ENCODE measurements at regions of chr22 and their contacts with region 1.

Region 1: DNA sequence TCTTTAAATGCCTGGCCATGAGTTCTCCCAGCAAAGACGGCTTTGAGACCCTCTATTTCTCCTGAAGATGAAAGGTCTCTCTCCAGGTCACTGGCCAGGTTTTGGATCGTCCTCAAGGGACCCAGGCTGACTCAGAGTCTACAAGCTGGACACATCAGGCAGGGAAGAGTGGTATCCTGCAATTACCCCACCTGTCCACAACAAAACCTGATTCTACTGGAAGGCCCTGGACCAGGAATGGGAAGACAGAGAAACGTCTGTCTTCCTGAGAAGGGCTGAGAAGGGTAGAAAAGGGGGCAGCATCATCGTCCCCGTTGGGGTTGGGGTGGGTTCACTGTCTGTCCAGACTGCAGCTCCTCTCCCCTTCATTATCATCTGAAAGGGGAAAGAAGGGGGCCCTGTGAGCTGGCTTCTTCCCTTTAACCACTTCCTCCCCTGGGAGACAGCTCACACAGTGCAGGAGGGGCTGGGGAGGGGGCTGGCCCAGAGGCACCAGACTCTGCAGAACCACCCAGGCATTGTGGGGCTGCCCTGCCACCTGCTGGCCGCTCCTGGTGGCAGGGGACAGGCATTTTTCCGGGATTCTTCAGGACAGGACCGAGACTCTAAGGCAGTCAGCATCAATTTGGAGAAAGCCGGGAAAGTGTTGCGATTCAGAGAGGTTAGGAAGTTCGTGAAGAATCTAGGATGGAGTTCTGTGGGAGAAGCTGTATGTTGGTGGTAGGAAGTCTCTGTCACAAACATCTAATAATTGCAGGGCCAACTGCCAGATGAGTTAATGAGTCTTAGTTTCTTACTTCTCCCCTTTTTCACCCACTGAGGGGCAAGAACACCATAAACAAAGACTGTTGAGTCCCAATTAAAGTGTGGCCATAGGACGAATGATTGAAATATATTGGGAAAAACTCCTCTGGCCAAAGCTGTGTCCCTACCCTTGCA is 57.6 kb downstream of the SYN3 start:
- DNase-seq: peak; percentile 56
- ATAC-seq: peak; percentile 39
- H3K4me3 ChIP-seq: no peak overlapping the region
- H3K4me3 Mint-ChIP-seq: no peak overlapping the region
- H3K27ac ChIP-seq: no peak overlapping the region
- H3K27ac Mint-ChIP-seq: no peak overlapping the region
- H3K4me1 ChIP-seq: peaks cover 6 to 8% of the 10 kb centered on the region in 2 donors
- H3K4me1 Mint-ChIP-seq: peaks cover 4% of the 10 kb centered on the region
- H3K27me3 ChIP-seq: no peaks in the 10 kb centered on the region
- H3K27me3 Mint-ChIP-seq: peaks cover 20% of the 10 kb centered on the region
- CTCF ChIP-seq: peak; percentile 78

Region 2: DNA sequence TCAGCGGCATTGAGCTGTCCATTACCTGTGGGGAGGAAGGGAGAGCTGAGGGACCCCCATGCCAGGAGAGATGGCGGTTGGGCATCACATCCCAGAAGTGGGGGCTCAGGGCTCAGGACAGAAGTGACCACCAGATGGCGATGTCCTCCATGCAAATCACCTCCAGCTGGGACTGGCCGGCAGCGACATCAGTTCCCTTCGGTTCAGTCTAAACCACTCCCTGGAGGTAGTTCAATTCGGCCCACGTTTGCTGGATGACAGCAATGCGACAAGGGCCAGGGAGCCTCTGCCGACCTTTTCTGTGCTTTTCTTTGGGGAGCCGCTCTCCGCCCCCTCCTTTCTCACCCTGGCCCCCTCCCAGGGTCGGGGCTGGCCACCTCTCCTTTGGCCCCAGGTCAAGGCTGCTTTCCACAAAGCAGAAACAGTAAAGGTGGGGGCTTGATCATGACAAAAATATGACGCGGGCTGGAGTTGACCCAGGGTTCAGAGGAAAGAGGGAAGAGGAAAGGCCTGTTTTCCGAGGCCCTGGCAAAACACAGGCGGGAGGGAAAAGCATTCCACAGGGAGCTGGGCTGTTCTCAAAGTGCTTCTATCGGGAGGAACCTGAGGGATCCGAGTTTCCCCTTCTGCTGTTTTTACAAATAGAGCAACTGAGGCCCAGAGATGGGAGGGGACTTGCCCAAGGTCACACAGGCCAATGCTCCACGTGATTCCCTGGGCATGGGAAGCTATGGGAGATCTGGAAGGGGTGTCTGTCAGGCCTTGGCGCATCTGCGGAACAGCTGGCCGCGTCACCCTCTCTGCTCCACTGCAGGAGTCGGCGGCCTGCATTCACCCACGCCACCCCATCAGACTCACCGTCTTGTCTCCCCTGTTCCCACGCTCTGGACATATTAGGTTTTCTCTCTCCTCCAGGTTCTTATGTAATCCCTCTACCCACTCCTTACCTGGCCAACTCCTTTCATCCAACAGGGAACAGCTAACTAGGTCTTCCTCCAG is 471.3 kb before region 1 on chr22:
- CTCF ChIA-PET with region 1: no interaction called
- POLR2A ChIA-PET with region 1: no interaction called
- intact Hi-C with region 1: loop called (anchors 2 kb)
- DNase-seq: peak; percentile 63
- ATAC-seq: peak; percentile 43
- H3K4me3 ChIP-seq: no peak overlapping the region
- H3K4me3 Mint-ChIP-seq: no peak overlapping the region
- H3K27ac ChIP-seq: no peak overlapping the region
- H3K27ac Mint-ChIP-seq: no peak overlapping the region
- H3K4me1 ChIP-seq: no peaks in the 10 kb centered on the region
- H3K4me1 Mint-ChIP-seq: no peaks in the 10 kb centered on the region
- H3K27me3 ChIP-seq: no peaks in the 10 kb centered on the region
- H3K27me3 Mint-ChIP-seq: peaks cover 12% of the 10 kb centered on the region
- CTCF ChIP-seq: peak; percentile 58

Region 3: GRCh38 chr22:33180356-33180755 is 179.7 kb after region 1 on chr22:
- CTCF ChIA-PET with region 1: no interaction called
- POLR2A ChIA-PET with region 1: no interaction called
- intact Hi-C with region 1: no loop called
- DNase-seq: no peak
- ATAC-seq: no peak
- H3K4me3 ChIP-seq: no peak overlapping the region
- H3K4me3 Mint-ChIP-seq: no peak overlapping the region
- H3K27ac ChIP-seq: no peak overlapping the region
- H3K27ac Mint-ChIP-seq: no peak overlapping the region
- H3K4me1 ChIP-seq: no peaks in the 10 kb centered on the region
- H3K4me1 Mint-ChIP-seq: no peaks in the 10 kb centered on the region
- H3K27me3 ChIP-seq: peaks cover 0 to 10% (median 0%) of the 10 kb centered on the region in 4 experiments
- H3K27me3 Mint-ChIP-seq: peaks cover 21% of the 10 kb centered on the region
- CTCF ChIP-seq: no peak

Measured in B cell (primary cell).